ENCODE measurements at regions of chr15 and their contacts with region 1.

Region 1: GRCh38 chr15:85899927-85900326 is 105.2 kb upstream of the KLHL25 start:
- DNase-seq: no peak
- H3K4me3 Mint-ChIP-seq: no peak overlapping the region
- H3K27ac Mint-ChIP-seq: no peak overlapping the region
- H3K4me1 Mint-ChIP-seq: no peaks in the 10 kb centered on the region
- H3K27me3 Mint-ChIP-seq: peaks cover 71% of the 10 kb centered on the region
- CTCF ChIP-seq: no peak

Region 2: DNA sequence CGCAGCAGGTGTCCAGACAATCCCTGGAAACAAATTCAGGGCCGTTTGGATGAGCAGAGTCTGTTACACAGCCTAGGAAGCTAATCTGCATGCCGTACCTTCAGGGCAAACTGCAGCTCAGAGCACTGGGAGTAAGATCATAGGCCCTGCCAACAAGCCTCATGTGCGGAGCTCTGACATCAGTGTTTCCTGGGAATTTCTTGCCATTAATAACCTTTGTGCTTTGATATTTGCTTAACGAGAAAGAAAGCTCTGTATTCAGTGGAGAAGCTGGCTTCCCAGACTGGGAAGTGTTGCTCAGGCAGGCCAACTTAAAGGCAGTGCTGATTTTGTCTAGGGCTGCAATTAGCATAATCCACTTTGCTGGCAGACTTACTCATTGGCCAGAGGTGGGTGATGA is 10.9 kb after region 1 on chr15:
- CTCF ChIA-PET with region 1: no interaction called
- POLR2A ChIA-PET with region 1: interaction called, 3 read pairs
- intact Hi-C with region 1: loop called (anchors 1 kb)
- DNase-seq: no peak
- H3K4me3 Mint-ChIP-seq: no peak overlapping the region
- H3K27ac Mint-ChIP-seq: no peak overlapping the region
- H3K4me1 Mint-ChIP-seq: no peaks in the 10 kb centered on the region
- H3K27me3 Mint-ChIP-seq: peaks cover 32% of the 10 kb centered on the region
- CTCF ChIP-seq: no peak

Region 3: GRCh38 chr15:86295511-86295910 is 395.6 kb after region 1 on chr15:
- CTCF ChIA-PET with region 1: no interaction called
- POLR2A ChIA-PET with region 1: no interaction called
- intact Hi-C with region 1: no loop called
- DNase-seq: no peak
- H3K4me3 Mint-ChIP-seq: no peak overlapping the region
- H3K27ac Mint-ChIP-seq: no peak overlapping the region
- H3K4me1 Mint-ChIP-seq: peaks cover 6% of the 10 kb centered on the region
- H3K27me3 Mint-ChIP-seq: no peaks in the 10 kb centered on the region
- CTCF ChIP-seq: no peak

Measured in MCF 10A (cell line).